RWPE1 (cell line): ENCODE measurements at regions of chr7 and their contacts with region 1.

Region 1: DNA sequence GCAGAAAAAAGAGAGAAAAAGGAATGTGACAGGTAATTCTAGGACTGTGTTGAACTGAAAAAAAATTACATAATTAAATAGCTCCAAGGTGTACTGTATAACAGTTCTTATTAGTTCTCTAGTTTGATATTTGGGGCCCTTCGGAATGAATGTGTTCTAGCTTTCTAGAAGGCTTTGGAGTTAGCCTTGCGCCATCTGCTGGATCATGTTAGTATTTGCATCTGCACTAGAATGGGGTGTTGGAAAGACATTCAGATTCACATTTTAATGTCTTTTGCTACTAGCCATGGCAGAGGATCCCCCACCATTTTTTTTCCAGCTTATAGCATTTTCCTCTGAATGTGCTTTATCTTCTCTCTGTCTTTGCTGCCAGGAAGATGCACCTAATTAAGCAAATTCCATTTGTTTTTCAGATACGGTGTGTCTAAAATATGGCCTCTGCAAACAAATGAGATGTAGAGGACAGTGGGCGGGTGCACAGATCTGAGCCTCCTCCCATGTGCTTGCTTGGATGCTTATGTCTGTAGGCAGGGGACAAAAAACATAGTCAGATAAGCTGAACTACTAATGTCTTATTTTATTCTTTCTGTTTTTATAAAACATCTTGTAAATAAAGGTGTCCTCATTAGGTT is 238.5 kb downstream of the PHF14 start:
- DNase-seq: peak; percentile 49
- H3K27ac ChIP-seq: no peak overlapping the region
- CTCF ChIP-seq: peak; percentile 93

Region 2: GRCh38 chr7:10727636-10728035 is 484.6 kb before region 1 on chr7:
- CTCF ChIA-PET with region 1: no interaction called
- POLR2A ChIA-PET with region 1: no interaction called
- DNase-seq: no peak
- H3K27ac ChIP-seq: no peak overlapping the region
- CTCF ChIP-seq: no peak

Region 3: GRCh38 chr7:11228515-11228914 is 16.3 kb after region 1 on chr7:
- CTCF ChIA-PET with region 1: interaction called, 12 read pairs
- POLR2A ChIA-PET with region 1: no interaction called
- DNase-seq: no peak
- H3K27ac ChIP-seq: no peak overlapping the region
- CTCF ChIP-seq: no peak

Region 4: DNA sequence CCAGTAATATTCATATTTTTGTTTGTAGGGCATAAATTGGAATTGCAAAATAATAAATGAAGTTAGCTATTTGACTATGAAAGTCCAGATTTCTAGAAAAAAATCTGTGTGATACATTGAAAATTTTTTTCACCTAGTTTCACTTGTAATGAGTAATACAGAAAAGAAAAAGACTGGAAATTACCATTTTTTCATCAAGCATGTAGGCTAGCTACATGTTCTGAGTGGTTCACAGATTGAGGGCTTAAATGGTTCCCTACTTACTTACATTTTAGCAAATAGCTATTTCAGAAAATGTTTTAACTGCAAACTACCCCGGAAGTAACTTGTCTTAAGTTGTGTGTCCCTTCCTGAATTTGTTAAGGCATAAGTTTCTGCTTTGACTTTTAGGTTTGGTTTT is 157.5 kb after region 1 on chr7:
- CTCF ChIA-PET with region 1: no interaction called
- POLR2A ChIA-PET with region 1: no interaction called
- DNase-seq: no peak
- H3K27ac ChIP-seq: no peak overlapping the region
- CTCF ChIP-seq: no peak